ENCODE measurements at regions of chr1 and their contacts with region 1.

Region 1: GRCh38 chr1:11979851-11980675 is at the start of gene MFN2:
- DNase-seq: peak; percentile 92
- H3K4me3 Mint-ChIP-seq: peak within 1 kb of the TSS; percentile 96
- H3K27ac Mint-ChIP-seq: peak within 1 kb of the TSS; percentile 97
- H3K4me1 Mint-ChIP-seq: peaks cover 32% of the 10 kb centered on the region
- H3K27me3 Mint-ChIP-seq: no peaks in the 10 kb centered on the region
- total RNA-seq, gene MFN2: 67.9 and 69.5 TPM in 2 replicates

Region 2: GRCh38 chr1:11934302-11935056 is 45.6 kb before region 1 on chr1 and contains the start of gene PLOD1:
- intact Hi-C with region 1: loop called (anchors 5 kb)
- DNase-seq: peak; percentile 76
- H3K4me3 Mint-ChIP-seq: peak within 1 kb of the TSS; percentile 82
- H3K27ac Mint-ChIP-seq: peak within 1 kb of the TSS; percentile 38
- H3K4me1 Mint-ChIP-seq: peaks cover 8% of the 10 kb centered on the region
- H3K27me3 Mint-ChIP-seq: no peaks in the 10 kb centered on the region
- total RNA-seq, gene PLOD1: 39.4 and 44.0 TPM in 2 replicates

Region 3: DNA sequence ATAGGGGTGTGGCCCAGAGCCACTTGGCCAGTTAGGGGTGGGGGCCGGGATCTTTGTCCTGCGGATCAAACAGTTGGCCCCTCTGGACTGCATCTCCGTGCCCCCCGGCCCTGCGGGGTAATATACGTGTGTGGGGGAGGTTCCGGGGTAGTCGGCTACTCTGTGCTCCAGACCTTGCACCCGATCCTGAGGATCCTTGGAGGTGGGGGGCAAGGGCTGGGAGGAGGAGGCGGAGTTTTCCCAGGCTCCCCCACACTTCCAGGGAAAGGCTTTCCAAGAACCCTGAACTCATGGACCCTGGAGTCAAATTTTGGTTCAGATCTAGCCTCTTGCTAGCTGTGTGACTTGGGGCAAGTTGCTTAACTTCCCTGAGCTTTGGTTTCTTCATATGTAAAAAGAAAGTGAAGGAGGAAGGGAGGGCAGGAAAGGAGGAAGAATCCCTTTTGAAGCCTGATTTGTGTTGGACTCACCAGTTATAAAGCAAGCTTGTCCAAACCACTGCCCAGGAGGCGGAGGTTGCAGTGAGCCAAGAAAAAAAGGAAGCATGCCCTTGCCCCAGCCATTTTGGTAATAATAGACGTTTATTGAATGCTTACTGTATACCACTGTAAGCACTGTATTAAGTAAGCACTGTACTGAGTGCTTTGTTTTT is 39.9 kb after region 1 on chr1:
- intact Hi-C with region 1: loop called (anchors 2 kb)
- DNase-seq: no peak
- H3K4me3 Mint-ChIP-seq: peak overlapping the region; percentile 87
- H3K27ac Mint-ChIP-seq: peak overlapping the region; percentile 72
- H3K4me1 Mint-ChIP-seq: peaks cover 6% of the 10 kb centered on the region
- H3K27me3 Mint-ChIP-seq: no peaks in the 10 kb centered on the region

Measured in activated T-helper 2 cell treated with anti-CD3 and anti-CD28 coated beads, Interferon-gamma antibody, Interleukin-2, Interleukin-4, amounts not matched to agents 10 μg/mL and 5 μg/mL and 100 μg/mL, durations not matched to agents 14 hours and 24 hours and 36 hours (primary cell).